Prostate gland (tissue), 2 donors: ENCODE measurements at regions of chr3 and their contacts with region 1.

Region 1: DNA sequence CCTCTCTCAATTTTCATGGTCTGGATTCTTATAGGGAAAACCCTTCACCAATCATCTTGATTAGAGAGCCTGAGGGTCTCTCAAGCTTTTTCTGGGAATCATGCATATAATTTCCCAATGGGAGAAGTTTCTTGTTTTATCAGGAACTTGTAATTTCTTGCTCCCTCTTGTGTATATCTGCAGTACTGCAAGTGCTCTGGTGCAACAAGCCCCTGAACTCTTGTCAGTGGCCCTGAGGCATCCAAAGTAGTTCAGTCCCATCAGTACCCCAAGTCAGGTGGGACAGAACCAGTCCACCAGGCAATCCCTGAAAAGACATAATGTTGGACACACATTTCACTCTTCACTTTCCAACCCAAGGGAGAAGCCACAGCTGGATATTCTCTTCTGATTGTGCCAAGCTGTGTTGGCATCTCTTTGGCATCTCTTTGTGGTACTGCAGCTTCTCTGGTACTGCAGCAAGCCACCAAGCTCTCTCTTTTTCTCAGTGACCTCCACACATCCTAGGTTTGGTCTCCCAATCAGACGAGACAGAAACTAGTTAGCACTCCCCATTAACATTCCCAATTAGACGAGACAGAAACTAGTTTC is 214.5 kb downstream of the ZIC4 start:
- DNase-seq: peak; percentile 7
- H3K4me3 ChIP-seq: no peak overlapping the region
- H3K27ac ChIP-seq: no peak overlapping the region
- H3K4me1 ChIP-seq: no peaks in the 10 kb centered on the region
- H3K27me3 ChIP-seq: no peaks in the 10 kb centered on the region
- CTCF ChIP-seq: peak; percentile 31 to 61 (median 46)
- POLR2A ChIP-seq: no peak

Region 2: DNA sequence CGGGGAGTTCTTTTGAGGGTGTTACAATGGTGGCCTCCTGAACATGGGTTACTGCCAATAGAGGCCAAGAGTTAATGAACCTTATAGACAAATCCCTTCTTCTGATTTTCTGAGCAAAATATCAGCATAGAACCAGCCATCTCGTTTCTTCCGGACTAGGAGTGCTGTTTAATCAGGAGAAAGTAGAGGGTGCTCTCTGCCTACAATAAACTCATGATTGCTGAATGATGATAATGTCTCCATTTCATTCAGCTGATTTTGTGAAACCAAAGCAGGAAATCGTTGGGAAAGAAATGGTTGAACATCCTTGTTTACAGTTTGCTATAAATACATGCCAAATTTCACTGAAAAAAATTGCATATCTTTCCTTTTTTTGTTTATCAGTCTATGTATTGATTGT is 444.0 kb before region 1 on chr3:
- intact Hi-C with region 1: loop called (anchors 10 kb)
- DNase-seq: no peak
- H3K4me3 ChIP-seq: no peak overlapping the region
- H3K27ac ChIP-seq: no peak overlapping the region
- H3K4me1 ChIP-seq: no peaks in the 10 kb centered on the region
- H3K27me3 ChIP-seq: no peaks in the 10 kb centered on the region
- CTCF ChIP-seq: peak in 1 of 4 experiments; percentile 4
- POLR2A ChIP-seq: no peak